ENCODE measurements at regions of chr3 and their contacts with region 1.

Region 1: GRCh38 chr3:36729204-36730056 is 34.9 kb downstream of the DCLK3 start:
- DNase-seq: peak in 1 of 2 experiments; percentile 57
- H3K4me3 ChIP-seq: no peak overlapping the region
- H3K4me1 ChIP-seq: no peaks in the 10 kb centered on the region
- H3K27me3 ChIP-seq: no peaks in the 10 kb centered on the region

Region 2: GRCh38 chr3:36868614-36869436 is 139.4 kb after region 1 on chr3:
- in situ Hi-C with region 1: loop called (anchors 10 kb)
- DNase-seq: peak; percentile 57 to 66
- H3K4me3 ChIP-seq: no peak overlapping the region
- H3K4me1 ChIP-seq: no peaks in the 10 kb centered on the region
- H3K27me3 ChIP-seq: peaks cover 3% of the 10 kb centered on the region; the same call in 1 of the 2 replicates

Region 3: DNA sequence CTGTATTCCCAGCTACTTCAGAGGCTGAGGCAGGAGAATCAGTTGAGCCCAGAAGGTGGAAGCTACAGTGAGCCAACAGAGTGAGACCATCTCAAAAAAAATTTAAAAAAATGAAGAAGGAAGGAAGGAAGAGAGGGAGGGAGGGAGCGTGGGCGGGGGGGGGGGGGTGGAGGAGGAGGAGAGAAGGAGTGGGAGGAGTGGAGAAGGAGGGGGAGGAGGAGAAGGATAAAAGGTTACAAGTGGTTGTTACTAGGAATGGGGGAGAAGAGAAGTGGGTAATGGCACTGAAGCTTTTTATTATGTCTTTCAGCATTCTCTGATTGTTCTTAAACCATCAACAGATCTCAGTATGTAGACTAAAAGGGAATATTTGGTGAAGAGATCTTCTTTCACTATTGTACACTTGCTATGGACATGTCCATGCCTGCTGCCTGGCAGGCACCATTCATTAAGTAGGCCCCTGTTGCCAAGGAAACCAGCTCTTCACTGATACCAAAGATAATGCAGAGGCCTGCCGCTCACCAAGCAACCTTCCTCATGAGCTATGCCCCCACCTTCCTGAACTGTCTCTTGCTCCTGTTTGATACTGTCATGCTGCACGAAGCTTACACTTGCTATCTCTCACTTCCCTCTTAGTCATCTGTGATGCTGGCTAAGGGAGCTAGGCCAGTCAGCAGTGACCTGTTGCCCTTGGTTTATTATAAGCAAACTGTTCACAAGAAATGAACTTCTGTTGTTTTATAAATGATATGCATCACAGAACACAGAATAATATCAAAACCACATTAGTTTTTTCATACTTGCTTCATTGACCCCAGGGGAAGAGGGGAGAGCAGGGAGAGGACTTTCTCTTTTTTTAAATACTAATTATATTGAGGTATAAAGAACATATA is 240.4 kb after region 1 on chr3:
- in situ Hi-C with region 1: loop called (anchors 25 kb)
- DNase-seq: peak; percentile 76 to 77
- H3K4me3 ChIP-seq: no peak overlapping the region
- H3K4me1 ChIP-seq: peaks cover 6% of the 10 kb centered on the region; the same call in 1 of the 2 replicates
- H3K27me3 ChIP-seq: no peaks in the 10 kb centered on the region

Region 4: DNA sequence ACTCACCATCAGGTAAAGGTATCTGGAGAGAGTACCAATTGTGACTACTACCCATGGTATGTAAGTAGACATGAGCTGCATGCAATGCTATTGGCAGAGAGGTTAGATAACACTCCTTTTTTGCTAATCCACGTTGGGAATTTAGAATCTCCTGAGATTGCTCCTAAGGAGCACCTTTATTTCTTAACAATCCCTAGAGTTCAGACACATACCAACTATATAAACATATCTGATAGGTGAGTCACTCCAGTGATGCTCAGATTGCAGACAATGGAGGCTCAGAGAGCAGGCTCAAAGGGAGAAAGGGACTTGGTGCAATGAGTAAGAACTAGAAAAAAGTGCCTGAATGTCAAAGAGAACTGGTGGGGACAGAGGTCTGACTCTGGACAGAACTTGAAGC is 492.0 kb after region 1 on chr3:
- in situ Hi-C with region 1: loop called (anchors 25 kb)
- DNase-seq: no peak
- H3K4me3 ChIP-seq: no peak overlapping the region
- H3K4me1 ChIP-seq: no peaks in the 10 kb centered on the region
- H3K27me3 ChIP-seq: peaks cover 2% of the 10 kb centered on the region; the same call in 1 of the 2 replicates

Measured in HAP-1 (cell line).